Heart left ventricle (tissue), 16 donors: ENCODE measurements at regions of chr12 and their contacts with region 1.

Region 1: GRCh38 chr12:120562906-120563305 is 18.3 kb downstream of the POP5 start:
- DNase-seq: peak in 2 of 5 donors; percentile 50 to 77
- ATAC-seq: peak; percentile 89 to 94 (median 92)
- H3K4me3 ChIP-seq: no peak overlapping the region
- H3K27ac ChIP-seq: peak overlapping the region in 11 of 12 donors; percentile 55 to 83 (median 69)
- H3K4me1 ChIP-seq: peaks cover 0 to 11% (median 0%) of the 10 kb centered on the region in 12 donors
- H3K27me3 ChIP-seq: no peaks in the 10 kb centered on the region
- CTCF ChIP-seq: no peak
- POLR2A ChIP-seq: no peak

Region 2: GRCh38 chr12:120469450-120470149 is 93.3 kb before region 1 on chr12 and contains the start of gene SRSF9:
- intact Hi-C with region 1: loop called in 1 of 10 experiments (anchors 10 kb)
- DNase-seq: peak; percentile 96 to 99 (median 97)
- ATAC-seq: peak; percentile 95 to 98 (median 96)
- H3K4me3 ChIP-seq: peak within 1 kb of the TSS; percentile 63 to 99 (median 92)
- H3K27ac ChIP-seq: peak within 1 kb of the TSS; percentile 76 to 96 (median 92)
- H3K4me1 ChIP-seq: peaks cover 0 to 45% (median 31%) of the 10 kb centered on the region in 12 donors
- H3K27me3 ChIP-seq: no peaks in the 10 kb centered on the region
- CTCF ChIP-seq: peak; percentile 84 to 100 (median 94)
- POLR2A ChIP-seq: peak in 1 of 2 donors; percentile 61
- total RNA-seq, gene SRSF9: 14.8 to 67.1 (median 33.7) TPM

Region 3: DNA sequence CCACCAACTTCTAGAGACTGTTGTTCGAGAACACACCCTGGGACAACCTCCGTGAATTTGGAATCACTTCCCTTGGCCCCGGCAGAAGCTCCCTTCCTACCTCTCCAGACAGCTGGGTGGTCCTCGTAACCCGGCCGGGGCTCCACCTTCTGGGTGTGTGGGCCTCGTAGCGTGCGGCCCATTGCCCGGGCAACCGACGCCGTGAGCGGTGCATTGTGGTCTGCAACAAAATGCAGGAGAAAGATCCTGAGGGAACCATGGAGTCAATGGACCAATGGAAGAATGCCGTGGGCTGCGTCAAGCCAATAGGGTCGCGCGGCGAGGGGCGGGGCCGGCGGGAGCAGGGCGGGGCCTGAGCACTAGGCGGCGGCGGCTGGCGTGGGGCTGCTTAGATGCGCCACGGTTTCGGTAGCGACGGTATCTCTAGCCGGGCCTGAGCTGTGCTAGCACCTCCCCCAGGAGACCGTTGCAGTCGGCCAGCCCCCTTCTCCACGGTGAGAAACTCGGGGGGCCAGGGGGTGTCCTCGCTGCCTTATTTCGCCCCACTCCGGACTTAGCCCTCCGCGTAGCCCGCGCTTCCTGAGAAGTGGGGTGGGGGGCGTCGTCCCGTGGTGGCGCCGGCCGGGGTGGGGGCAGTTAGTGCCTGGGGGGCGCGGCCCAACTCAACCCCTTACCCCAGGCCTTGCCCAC is 67.0 kb before region 1 on chr12 and contains the start of gene DYNLL1:
- intact Hi-C with region 1: no loop called
- DNase-seq: peak; percentile 95 to 98 (median 96)
- ATAC-seq: peak; percentile 97 to 99 (median 98)
- H3K4me3 ChIP-seq: peak within 1 kb of the TSS; percentile 74 to 100 (median 92)
- H3K27ac ChIP-seq: peak within 1 kb of the TSS; percentile 75 to 97 (median 92)
- H3K4me1 ChIP-seq: peaks cover 0 to 32% (median 19%) of the 10 kb centered on the region in 12 donors
- H3K27me3 ChIP-seq: no peaks in the 10 kb centered on the region
- CTCF ChIP-seq: peak in 2 of 12 donors; percentile 11 to 14
- POLR2A ChIP-seq: peak; percentile 33 to 87
- total RNA-seq, gene DYNLL1: 92.2 to 269 (median 120) TPM

Region 4: DNA sequence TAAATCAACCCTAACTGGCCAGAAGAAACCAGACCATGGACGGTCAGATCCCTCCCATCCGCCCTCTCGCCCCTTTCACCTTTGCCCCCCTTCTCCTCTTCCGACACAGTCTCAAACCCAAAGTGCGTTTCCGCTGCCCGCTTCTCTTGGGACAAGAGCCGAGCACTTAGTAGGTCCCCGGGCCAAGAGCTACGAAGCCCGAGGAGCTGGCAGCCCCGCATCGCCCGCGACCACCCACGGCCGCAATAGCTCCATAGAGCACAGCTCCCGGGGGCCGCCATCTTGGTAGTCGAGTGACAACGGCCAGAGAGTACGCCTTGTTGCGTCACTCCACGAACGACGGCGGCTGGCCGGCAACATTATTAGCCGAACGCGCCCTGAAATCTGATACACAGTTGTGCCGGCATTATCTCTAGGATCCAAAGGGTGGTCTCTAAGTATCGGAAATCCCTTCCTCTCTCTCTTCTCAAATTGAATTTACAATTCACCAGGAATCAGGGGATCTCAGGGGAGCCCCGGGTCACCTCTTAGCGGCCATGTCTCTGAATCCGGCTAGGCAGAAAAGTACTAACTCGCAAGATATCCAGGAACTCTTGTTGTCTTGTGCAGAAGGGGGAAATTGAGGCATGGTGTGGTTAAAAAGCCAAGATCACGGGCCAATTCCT is 33.9 kb before region 1 on chr12 and contains the start of gene COQ5:
- intact Hi-C with region 1: no loop called
- DNase-seq: peak; percentile 90 to 94 (median 93)
- ATAC-seq: peak; percentile 91 to 98 (median 96)
- H3K4me3 ChIP-seq: peak within 1 kb of the TSS; percentile 50 to 96 (median 71)
- H3K27ac ChIP-seq: peak within 1 kb of the TSS; percentile 77 to 97 (median 92)
- H3K4me1 ChIP-seq: peaks cover 0 to 18% (median 5%) of the 10 kb centered on the region in 12 donors
- H3K27me3 ChIP-seq: no peaks in the 10 kb centered on the region
- CTCF ChIP-seq: no peak
- POLR2A ChIP-seq: peak in 1 of 2 donors; percentile 40
- total RNA-seq, gene COQ5: 27.9 to 46.5 (median 36.7) TPM

Region 5: DNA sequence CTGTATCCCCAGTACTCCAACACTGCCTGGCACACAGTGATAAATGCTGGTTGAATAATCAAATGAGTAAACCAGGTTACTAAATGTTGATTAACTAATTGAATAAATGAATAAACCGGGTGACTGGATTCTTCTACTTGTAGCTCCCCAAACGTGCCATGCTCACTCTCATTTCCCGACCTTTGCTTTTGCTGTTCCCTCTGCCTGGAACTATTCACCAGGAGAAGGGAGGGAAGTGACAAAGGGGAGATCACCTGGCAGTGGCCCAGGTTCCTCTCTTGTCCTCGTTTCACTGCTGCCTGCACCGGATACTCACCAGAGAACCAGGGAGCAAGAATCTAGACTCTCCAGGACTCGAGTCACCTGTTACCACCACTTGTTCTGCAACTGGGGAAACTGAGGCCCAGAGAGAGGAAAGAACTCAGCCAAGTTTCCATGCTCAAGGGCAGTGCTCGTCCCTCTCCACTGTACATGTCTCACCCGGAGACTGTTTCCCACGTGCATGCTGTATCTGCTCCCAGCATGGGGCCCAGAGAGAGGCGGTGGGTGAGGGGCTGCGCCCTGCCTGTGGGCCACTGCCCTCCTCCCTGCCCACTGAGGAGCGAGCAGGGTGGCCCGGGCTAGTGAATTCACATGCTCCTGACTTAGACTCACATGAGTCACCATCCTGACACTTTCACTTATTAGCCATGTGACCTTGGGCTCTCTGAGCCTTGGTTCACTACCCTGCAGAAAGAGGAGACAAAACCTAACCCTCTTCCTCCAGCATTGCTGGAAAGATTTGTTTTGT is 36.0 kb after region 1 on chr12:
- intact Hi-C with region 1: no loop called
- DNase-seq: no peak
- ATAC-seq: peak; percentile 67 to 86 (median 79)
- H3K4me3 ChIP-seq: no peak overlapping the region
- H3K27ac ChIP-seq: no peak overlapping the region
- H3K4me1 ChIP-seq: peaks cover 0 to 9% (median 4%) of the 10 kb centered on the region in 12 donors
- H3K27me3 ChIP-seq: peaks cover 0 to 6% (median 0%) of the 10 kb centered on the region in 9 donors
- CTCF ChIP-seq: no peak
- POLR2A ChIP-seq: no peak